ENCODE measurements at regions of chr10 and their contacts with region 1.

Region 1: GRCh38 chr10:71893920-71894319 is 42.9 kb upstream of the PSAP start:
- DNase-seq: no peak
- H3K27ac ChIP-seq: no peak overlapping the region
- CTCF ChIP-seq: no peak

Region 2: DNA sequence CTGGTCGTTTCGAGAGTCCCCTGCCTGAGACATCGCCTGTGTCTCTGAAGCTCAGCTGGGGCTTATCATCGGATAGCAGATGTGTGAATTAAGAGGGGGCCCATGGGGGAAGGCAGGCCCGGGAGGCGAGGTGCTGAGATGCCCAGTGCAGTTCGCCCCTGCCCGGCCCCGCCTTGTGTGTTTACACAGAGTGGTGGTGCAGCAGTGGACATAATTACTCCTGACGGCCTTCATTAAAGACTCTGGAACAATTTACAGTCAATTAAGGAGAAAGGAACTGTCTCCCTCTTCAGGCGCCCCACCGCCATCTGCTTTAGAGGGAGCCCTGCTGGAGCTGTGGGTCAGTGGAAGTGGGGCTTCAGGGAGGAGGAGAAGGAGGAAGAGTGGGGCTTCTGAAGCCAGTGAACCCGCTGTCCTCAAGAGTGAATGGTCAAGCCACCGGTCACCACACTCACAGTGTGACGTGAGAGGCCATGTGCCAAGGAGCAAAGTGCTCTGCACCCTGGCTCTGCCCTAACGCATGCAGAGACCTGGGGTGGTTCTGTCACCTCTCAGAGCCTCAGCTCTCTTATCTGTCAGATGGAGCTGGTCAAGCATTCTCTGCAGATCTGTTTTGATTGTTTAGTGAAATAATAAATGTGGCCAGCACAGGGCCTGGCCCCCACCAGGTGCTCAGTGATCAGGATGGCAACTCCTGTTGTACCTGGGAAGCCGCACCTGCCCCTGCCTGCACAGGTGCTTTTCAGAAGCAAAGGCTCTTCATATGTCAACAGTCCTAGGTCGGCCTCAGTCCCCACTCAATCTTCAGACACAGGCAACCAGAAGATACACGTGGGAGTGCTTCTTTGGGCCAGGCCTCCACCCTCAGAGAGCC is 431.6 kb before region 1 on chr10:
- CTCF ChIA-PET with region 1: no interaction called
- POLR2A ChIA-PET with region 1: no interaction called
- DNase-seq: no peak
- H3K27ac ChIP-seq: no peak overlapping the region
- CTCF ChIP-seq: no peak

Region 3: DNA sequence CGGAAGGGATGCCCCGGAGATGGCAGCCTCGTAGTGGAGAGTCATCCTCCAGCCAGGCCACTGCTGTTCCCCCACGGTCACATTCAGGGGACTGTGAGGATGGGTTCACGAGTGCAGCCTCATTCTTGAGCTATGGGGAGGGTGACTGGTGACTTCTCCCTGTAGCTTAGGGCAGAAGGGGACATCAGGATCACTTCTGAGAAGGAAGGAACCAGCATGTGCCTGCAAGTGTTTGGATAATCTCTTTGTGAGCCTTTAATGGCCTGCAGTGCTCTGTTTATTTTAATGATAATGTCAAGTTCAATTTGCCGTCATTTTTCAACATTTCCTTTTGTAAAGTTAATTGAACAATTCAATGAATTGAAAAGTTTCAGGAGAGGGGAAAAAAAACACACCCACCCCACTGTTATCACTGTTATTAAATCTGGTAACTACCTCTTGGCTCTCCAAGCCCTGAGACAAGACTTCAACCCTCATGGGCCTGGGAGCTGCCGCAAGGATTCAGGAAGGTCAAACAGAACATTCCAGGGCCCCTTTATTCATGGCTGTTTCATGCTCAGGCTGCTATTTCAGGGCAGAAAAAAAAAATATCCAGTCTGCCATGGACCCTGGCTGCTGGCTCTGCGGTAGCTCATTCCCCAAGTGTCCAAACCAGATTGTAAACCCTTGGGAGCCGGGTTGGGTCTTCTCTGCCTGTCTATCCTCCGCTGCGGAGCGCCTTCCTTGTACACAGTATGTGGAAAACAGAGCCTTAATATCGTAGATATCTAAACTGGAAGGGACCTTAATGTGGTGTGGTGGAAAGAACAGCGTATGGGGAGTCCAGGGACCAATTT is 396.8 kb before region 1 on chr10:
- CTCF ChIA-PET with region 1: no interaction called
- POLR2A ChIA-PET with region 1: no interaction called
- DNase-seq: no peak
- H3K27ac ChIP-seq: no peak overlapping the region
- CTCF ChIP-seq: no peak

Region 4: GRCh38 chr10:71582019-71582418 is 311.9 kb before region 1 on chr10:
- CTCF ChIA-PET with region 1: no interaction called
- POLR2A ChIA-PET with region 1: no interaction called
- DNase-seq: no peak
- H3K27ac ChIP-seq: no peak overlapping the region
- CTCF ChIP-seq: no peak

Region 5: DNA sequence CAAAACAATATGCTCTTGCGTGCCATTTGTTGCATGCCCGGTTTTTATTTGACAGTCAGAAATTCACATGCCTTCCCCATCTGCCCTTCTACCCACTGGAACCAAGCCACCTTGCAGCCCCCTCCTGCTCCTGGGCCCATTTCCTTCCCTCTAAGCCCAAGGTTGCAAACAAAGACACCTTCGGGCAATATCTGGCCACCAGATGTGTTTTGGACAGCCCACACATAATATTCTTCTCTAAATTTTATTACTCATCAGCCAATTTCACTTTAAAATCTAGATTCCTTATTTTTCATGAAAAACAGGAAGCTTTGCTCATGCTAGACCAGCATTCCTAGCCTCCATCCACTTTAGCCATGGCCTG is 156.1 kb before region 1 on chr10:
- CTCF ChIA-PET with region 1: no interaction called
- POLR2A ChIA-PET with region 1: no interaction called
- DNase-seq: no peak
- H3K27ac ChIP-seq: peak overlapping the region; percentile 88
- CTCF ChIP-seq: no peak

Region 6: GRCh38 chr10:71835671-71836595 is 58.0 kb before region 1 on chr10:
- CTCF ChIA-PET with region 1: interaction called, 20 read pairs
- POLR2A ChIA-PET with region 1: interaction called, 4 read pairs
- DNase-seq: no peak
- H3K27ac ChIP-seq: peak overlapping the region; percentile 56
- CTCF ChIP-seq: no peak

Region 7: GRCh38 chr10:71860243-71861029 is 33.5 kb before region 1 on chr10:
- CTCF ChIA-PET with region 1: interaction called, 11 read pairs
- POLR2A ChIA-PET with region 1: no interaction called
- DNase-seq: peak; percentile 97
- H3K27ac ChIP-seq: peak overlapping the region; percentile 90
- CTCF ChIP-seq: no peak

Region 8: DNA sequence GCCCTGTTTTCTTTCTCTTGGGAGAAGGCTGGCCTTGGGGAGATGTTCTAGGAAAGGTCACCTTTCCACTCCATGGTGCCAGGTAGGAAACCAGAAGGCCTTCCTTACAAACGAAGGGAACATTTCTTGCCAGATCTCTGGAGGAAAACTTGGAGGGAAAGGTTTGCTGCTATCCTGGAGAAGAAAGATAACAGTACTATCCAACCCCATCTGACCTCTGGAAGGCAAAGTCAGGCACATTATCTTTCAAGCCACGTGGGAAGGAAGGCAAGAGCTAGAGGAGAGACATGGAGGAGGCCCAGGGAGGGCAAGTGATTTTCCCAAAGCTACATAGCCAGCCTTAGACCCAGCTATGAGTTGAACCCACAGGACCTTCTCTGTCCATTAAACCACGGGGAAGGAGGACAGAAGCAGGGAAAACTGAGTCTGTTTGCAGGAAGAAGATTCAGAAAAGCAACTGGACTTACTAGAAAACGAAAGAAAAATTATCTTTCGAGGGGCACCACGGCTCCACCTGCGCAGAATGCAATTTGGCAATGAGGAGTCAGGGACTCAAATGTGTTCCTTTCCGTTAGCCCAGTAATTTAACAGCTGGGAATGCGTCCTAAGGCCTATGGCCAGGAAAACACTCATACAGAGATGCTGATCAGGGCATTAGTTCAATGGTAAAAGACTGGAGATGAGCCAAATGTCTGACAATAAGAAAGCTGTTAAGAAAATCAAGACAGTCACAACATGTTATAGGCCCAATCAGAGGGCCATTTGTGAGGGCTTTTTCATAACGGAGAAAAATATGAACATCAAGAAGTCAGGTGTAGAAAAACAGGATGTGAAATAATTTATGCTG is 10.9 kb before region 1 on chr10:
- CTCF ChIA-PET with region 1: interaction called, 16 read pairs
- POLR2A ChIA-PET with region 1: no interaction called
- DNase-seq: no peak
- H3K27ac ChIP-seq: no peak overlapping the region
- CTCF ChIP-seq: no peak

Region 9: GRCh38 chr10:71912431-71912830 is 18.5 kb after region 1 on chr10:
- CTCF ChIA-PET with region 1: interaction called, 10 read pairs
- POLR2A ChIA-PET with region 1: no interaction called
- DNase-seq: no peak
- H3K27ac ChIP-seq: no peak overlapping the region
- CTCF ChIP-seq: no peak

Region 10: DNA sequence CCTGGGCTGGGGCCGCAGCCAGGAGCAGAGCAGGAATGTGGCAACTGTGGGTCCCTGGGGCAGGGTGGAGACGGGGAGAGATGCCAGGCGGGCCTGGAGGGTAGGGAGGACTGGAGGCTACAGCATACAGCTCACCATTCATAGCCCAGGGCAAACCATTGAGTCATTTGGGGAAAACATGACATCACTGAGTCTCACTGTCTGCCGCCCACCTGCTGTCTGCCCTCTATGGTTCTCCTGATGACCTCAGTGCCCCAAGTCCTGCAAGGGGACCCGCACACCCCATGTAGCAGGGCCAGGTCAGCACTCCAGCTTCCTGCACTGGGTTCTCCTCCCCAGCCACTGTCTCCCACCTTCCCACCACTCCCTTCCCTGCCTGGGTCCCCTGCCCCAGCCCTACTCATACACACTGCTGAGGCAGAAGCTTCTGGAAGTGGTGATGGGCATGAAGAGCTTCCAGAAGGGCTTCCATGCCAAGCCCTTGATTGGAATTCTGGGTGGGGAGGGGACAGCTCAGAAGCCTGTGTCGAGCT is 80.6 kb after region 1 on chr10:
- CTCF ChIA-PET with region 1: interaction called, 19 read pairs
- POLR2A ChIA-PET with region 1: interaction called, 3 read pairs
- DNase-seq: peak; percentile 85
- H3K27ac ChIP-seq: peak overlapping the region; percentile 100
- CTCF ChIP-seq: no peak

Region 11: DNA sequence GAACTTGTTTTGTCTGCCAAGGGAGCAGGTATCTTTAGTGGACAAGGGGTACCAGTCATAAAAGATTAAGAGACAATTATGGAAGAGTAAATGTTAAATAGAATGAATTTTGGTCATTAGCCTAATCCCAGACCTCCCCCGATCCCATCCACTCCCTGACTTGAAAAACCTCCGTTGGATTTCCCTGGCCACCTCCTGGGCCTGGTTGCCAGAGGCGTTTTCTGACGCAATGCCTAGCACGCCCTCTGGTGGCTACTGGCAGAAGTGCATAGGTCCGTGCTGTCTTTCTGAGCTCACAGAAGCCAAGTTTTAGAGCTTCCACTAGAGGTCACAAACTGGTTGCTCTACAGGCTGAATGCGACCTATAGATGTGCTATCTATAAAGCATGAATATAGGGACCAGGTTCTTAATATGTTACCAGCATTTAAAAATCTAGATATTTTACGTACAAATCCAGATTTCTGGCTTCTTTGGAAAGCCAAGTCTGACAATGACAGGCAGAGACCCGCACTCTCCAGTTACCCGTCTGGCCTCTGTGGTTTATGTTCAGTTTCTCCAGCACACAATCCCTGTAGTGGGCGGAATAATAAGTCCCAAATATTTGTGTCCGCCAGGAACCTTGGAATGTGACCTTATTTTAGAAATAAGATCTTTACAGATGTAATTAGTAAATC is 154.7 kb after region 1 on chr10:
- CTCF ChIA-PET with region 1: interaction called, 28 read pairs
- POLR2A ChIA-PET with region 1: no interaction called
- DNase-seq: peak; percentile 95
- H3K27ac ChIP-seq: peak overlapping the region; percentile 40
- CTCF ChIP-seq: peak; percentile 99

Measured in RWPE1 (cell line).